PC-3 (cell line): ENCODE measurements at regions of chr1 and their contacts with region 1.

Region 1: DNA sequence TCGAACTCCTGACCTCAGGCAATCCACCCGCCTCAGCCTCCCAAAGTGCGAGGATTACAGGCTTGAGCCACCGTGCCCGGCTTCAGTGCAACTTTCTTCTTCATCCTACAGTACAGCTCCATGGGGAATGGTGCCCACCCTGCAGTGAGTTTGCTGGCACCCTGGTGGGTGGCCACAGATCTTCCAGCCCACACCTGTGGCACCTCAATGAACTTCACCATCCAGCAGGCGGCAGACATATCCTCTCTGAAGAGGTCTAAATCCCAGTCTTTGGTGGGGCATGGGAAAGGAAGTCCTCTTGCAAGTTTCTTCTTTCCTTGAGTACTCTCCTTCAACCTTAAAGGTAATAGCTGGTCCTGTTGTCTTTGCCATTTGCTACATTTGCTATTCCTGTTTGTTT is 18.1 kb upstream of the ZBTB8A start:
- DNase-seq: peak; percentile 18
- ATAC-seq: no peak
- H3K4me3 ChIP-seq: peak overlapping the region; percentile 60; the same call in 1 of the 2 replicates
- H3K27ac ChIP-seq: no peak overlapping the region
- H3K4me1 ChIP-seq: no peaks in the 10 kb centered on the region; the same call in 1 of the 2 replicates
- H3K27me3 ChIP-seq: no peaks in the 10 kb centered on the region
- CTCF ChIP-seq: no peak

Region 2: GRCh38 chr1:32448773-32449456 is 72.2 kb before region 1 on chr1:
- CTCF ChIA-PET with region 1: no interaction called
- POLR2A ChIA-PET with region 1: no interaction called
- intact Hi-C with region 1: loop called (anchors 5 kb)
- DNase-seq: peak; percentile 53
- ATAC-seq: peak; percentile 65
- H3K4me3 ChIP-seq: no peak overlapping the region
- H3K27ac ChIP-seq: peak overlapping the region; percentile 27; the same call in 1 of the 2 replicates
- H3K4me1 ChIP-seq: peaks cover 8% of the 10 kb centered on the region; the same call in 1 of the 2 replicates
- H3K27me3 ChIP-seq: no peaks in the 10 kb centered on the region
- CTCF ChIP-seq: peak; percentile 68

Region 3: DNA sequence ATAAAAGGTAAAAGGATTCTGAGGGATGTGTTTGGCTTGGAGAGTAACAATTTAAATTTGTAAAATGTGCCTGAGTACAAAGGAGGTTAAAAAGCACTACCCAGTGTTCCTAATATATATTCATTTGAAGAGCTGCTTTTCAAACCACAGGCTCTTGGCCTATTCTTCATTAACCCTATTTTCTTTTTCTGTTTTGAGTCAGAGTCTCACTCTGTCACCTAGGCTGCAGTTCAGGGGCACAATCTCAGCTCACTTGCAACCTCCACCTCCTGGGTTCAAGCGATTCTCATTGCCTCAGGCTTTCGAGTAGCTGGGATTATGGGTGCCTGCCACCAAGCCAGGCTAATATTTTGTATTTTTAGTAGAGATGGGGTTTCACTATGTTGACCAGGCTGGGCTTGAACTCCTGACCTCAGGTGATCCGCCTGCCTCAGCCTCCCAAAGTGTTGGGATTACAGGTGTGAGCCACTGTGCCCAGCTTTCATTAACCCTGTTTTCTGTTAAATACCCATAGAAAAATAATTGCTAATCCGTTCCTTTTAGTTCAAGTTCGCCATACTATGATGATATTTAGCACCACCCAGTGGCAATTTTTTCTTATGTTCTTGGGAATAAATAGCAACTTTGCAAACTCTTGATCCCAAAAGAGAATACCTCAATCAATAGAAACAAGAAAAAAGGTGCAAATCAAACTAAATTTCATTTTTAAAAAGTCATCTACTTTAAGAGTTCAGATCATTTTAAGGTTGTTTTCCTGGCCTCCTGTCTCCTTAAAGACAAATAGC is 98.7 kb after region 1 on chr1:
- CTCF ChIA-PET with region 1: no interaction called
- POLR2A ChIA-PET with region 1: no interaction called
- intact Hi-C with region 1: loop called (anchors 1 kb)
- DNase-seq: peak; percentile 37
- ATAC-seq: no peak
- H3K4me3 ChIP-seq: no peak overlapping the region
- H3K27ac ChIP-seq: no peak overlapping the region
- H3K4me1 ChIP-seq: no peaks in the 10 kb centered on the region
- H3K27me3 ChIP-seq: no peaks in the 10 kb centered on the region
- CTCF ChIP-seq: peak; percentile 51; the same call in 1 of the 2 replicates

Region 4: DNA sequence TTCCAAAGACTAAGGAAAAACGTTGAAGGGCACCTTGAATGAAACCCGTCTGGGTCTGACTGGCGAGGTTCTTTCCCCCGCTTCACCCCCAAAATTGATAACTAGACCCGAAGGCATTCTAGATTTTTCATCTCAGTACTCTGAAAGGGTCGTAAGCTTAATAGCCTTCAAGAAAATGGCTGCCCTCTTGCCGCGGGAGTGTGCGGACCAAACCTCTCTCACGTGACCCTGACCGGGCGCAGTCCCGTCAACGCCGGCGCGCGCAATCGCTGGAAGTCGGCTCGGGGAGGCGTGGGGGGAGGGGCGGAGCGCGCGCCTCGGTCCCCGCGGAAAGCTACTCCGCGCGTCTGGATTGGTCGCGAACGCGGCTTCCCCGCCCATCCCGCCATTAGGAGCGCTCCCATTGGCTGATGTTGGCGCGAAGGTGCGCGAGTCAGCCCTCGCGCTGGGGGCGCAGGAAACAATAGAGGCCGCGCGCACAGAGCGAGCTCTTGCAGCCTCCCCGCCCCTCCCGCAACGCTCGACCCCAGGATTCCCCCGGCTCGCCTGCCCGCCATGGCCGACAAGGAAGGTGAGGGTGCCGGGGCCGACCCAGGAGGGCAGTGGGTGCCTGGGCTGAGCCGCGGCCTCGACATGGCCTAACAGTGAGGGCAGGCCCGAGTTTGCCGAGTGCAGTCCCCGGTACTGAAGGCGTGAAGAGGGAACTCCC is 129.7 kb after region 1 on chr1 and contains the start of gene RBBP4:
- CTCF ChIA-PET with region 1: no interaction called
- POLR2A ChIA-PET with region 1: no interaction called
- intact Hi-C with region 1: loop called (anchors 10 kb)
- DNase-seq: peak; percentile 97
- ATAC-seq: peak; percentile 89
- H3K4me3 ChIP-seq: peak within 1 kb of the TSS; percentile 83
- H3K27ac ChIP-seq: peak within 1 kb of the TSS; percentile 97
- H3K4me1 ChIP-seq: peaks cover 34% of the 10 kb centered on the region
- H3K27me3 ChIP-seq: no peaks in the 10 kb centered on the region
- CTCF ChIP-seq: no peak
- total RNA-seq, gene RBBP4: 161 and 201 TPM in 2 replicates